ENCODE measurements at regions of chr9 and their contacts with region 1.

Region 1: GRCh38 chr9:17531642-17532254 is 47.1 kb upstream of the SH3GL2 start:
- DNase-seq: peak; percentile 61 to 72
- H3K4me3 ChIP-seq: no peak overlapping the region
- H3K4me1 ChIP-seq: peaks cover 6% of the 10 kb centered on the region; the same call in 1 of the 2 replicates
- H3K27me3 ChIP-seq: peaks cover 4% of the 10 kb centered on the region

Region 2: DNA sequence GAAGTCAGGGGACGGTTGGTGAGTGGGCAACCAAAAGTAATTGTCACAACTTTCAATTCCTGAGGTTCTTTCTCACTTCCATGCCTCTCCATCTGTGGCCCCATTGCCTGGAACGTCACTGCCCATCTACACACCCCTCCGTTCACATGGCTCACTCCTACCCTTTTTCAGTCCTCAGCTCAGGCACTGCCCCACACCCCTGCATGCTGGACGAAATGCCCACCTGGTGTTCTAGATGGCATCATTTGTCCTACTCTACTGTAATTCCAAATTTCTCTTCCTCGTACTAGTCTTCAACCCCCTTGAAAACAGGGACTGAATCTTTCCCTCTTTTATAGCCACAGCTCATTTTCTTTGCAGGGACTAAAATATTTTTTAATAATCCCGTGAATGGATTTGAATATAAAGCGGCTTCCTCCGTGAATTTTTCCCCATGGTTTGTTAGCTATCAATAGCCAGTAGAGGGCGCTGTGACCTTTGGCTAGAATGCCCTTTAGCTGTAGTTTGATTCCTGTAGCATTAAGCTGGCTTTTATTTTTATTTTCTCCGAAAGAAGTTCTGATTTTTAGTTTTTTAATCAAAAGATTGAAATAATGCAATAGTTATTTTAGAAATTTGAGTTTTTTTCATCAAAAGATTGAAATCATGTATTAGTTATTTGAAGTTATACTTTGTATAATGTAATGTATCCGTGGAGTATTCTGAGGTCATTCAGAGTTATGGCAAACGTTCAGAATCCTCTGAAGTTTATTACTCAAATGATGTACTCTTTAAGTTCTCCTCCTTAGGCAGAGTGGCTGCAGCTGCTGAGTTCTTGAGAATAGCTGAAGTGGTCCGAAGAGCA is 279.2 kb after region 1 on chr9:
- in situ Hi-C with region 1: loop called (anchors 5 kb)
- DNase-seq: peak; percentile 47 to 71
- H3K4me3 ChIP-seq: no peak overlapping the region
- H3K4me1 ChIP-seq: no peaks in the 10 kb centered on the region
- H3K27me3 ChIP-seq: no peaks in the 10 kb centered on the region; the same call in 1 of the 2 replicates

Region 3: DNA sequence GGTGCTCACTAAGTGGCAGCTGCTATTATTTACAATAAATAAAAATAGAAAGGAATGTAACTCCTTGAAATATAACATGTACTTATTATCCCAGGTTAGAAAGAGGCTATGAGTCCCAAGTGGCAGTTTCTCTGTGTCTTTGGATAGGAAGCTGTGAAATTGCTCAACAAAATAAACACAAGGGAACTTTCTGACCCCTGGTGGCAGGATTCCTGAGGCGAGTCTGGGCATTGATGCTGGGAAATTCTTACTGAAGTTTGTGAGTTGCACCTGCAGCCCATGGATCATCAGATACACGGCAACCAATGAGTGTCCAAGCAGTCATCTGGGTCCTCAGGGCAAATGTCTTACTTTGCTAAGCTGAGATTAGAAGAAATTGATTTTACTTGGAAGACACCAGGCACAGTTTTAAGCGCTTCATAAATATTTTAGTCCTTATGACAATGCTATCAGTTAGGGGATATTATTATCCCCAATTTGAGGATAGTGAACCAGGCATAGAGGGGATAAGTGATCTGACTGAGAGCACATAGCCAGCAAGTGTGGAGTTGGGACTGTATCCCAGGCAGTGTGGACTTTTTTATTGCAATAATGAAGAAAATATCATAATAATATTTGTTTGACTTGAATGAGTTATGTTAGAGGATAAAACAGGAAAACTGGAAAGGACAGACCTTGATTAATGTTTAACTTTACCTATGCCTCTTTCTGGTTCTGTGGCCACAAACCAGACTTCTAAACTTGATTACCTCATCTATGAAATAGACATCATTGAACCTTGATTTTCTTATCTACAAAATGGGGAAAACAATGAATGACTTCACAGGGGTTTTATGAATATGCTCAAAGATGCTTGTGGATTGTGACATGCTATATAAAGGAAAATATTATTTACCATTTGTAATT is 676.7 kb after region 1 on chr9:
- in situ Hi-C with region 1: loop called (anchors 10 kb)
- DNase-seq: peak; percentile 56 to 71
- H3K4me3 ChIP-seq: no peak overlapping the region
- H3K4me1 ChIP-seq: peaks cover 3% of the 10 kb centered on the region; the same call in 1 of the 2 replicates
- H3K27me3 ChIP-seq: no peaks in the 10 kb centered on the region

Region 4: GRCh38 chr9:19048966-19049916 is 1517.5 kb after region 1 on chr9 and contains the start of gene RRAGA:
- in situ Hi-C with region 1: loop called (anchors 25 kb)
- DNase-seq: peak; percentile 96 to 97
- H3K4me3 ChIP-seq: peak within 1 kb of the TSS; percentile 57
- H3K4me1 ChIP-seq: peaks cover 38% of the 10 kb centered on the region
- H3K27me3 ChIP-seq: no peaks in the 10 kb centered on the region

Measured in HAP-1 (cell line).